ENCODE measurements at regions of chr10 and their contacts with region 1.

Region 1: GRCh38 chr10:43574001-43574892 is at the start of gene ZNF239:
- DNase-seq: peak; percentile 82 to 91
- ATAC-seq: peak; percentile 89 to 92 (median 92)
- H3K4me3 ChIP-seq: peak within 1 kb of the TSS; percentile 35
- H3K4me3 Mint-ChIP-seq: peak within 1 kb of the TSS; percentile 95
- H3K27ac ChIP-seq: peak within 1 kb of the TSS; percentile 62
- H3K27ac Mint-ChIP-seq: peak within 1 kb of the TSS; percentile 93
- H3K4me1 ChIP-seq: peaks cover 27% of the 10 kb centered on the region
- H3K4me1 Mint-ChIP-seq: peaks cover 49 to 55% of the 10 kb centered on the region in 2 donors
- H3K27me3 ChIP-seq: no peaks in the 10 kb centered on the region
- H3K27me3 Mint-ChIP-seq: no peaks in the 10 kb centered on the region
- CTCF ChIP-seq: no peak
- total RNA-seq, gene ZNF239: 0.85 to 1.4 (median 0.94) TPM

Region 2: GRCh38 chr10:42552493-42553407 is 1021.5 kb before region 1 on chr10:
- intact Hi-C with region 1: loop called (anchors 10 kb)
- DNase-seq: peak; percentile 82 to 97
- ATAC-seq: peak; percentile 91 to 98 (median 95)
- H3K4me3 ChIP-seq: peak overlapping the region; percentile 59
- H3K4me3 Mint-ChIP-seq: peak overlapping the region; percentile 95
- H3K27ac ChIP-seq: peak overlapping the region; percentile 65
- H3K27ac Mint-ChIP-seq: peak overlapping the region; percentile 91 to 100
- H3K4me1 ChIP-seq: peaks cover 19% of the 10 kb centered on the region
- H3K4me1 Mint-ChIP-seq: peaks cover 36 to 43% of the 10 kb centered on the region in 2 donors
- H3K27me3 ChIP-seq: no peaks in the 10 kb centered on the region
- H3K27me3 Mint-ChIP-seq: peaks cover 0 to 3% of the 10 kb centered on the region in 2 donors
- CTCF ChIP-seq: no peak

Region 3: GRCh38 chr10:43138021-43138756 is 436.1 kb before region 1 on chr10 and contains the start of gene CSGALNACT2:
- intact Hi-C with region 1: loop called (anchors 5 kb)
- DNase-seq: peak; percentile 91 to 94
- ATAC-seq: peak; percentile 74 to 90 (median 83)
- H3K4me3 ChIP-seq: peak within 1 kb of the TSS; percentile 69
- H3K4me3 Mint-ChIP-seq: peak within 1 kb of the TSS; percentile 98
- H3K27ac ChIP-seq: peak within 1 kb of the TSS; percentile 90
- H3K27ac Mint-ChIP-seq: peak within 1 kb of the TSS; percentile 93 to 96
- H3K4me1 ChIP-seq: peaks cover 34% of the 10 kb centered on the region
- H3K4me1 Mint-ChIP-seq: peaks cover 77 to 78% of the 10 kb centered on the region in 2 donors
- H3K27me3 ChIP-seq: no peaks in the 10 kb centered on the region
- H3K27me3 Mint-ChIP-seq: no peaks in the 10 kb centered on the region
- CTCF ChIP-seq: no peak
- total RNA-seq, gene CSGALNACT2: 49.9 to 57.4 (median 52.8) TPM

Region 4: GRCh38 chr10:43407576-43408330 is 166.5 kb before region 1 on chr10:
- intact Hi-C with region 1: loop called (anchors 5 kb)
- DNase-seq: peak; percentile 80 to 95
- ATAC-seq: peak; percentile 32 to 60 (median 39)
- H3K4me3 ChIP-seq: peak overlapping the region; percentile 96
- H3K4me3 Mint-ChIP-seq: peak overlapping the region; percentile 99
- H3K27ac ChIP-seq: peak overlapping the region; percentile 99
- H3K27ac Mint-ChIP-seq: peak overlapping the region; percentile 99
- H3K4me1 ChIP-seq: peaks cover 56% of the 10 kb centered on the region
- H3K4me1 Mint-ChIP-seq: peaks cover 42 to 47% of the 10 kb centered on the region in 2 donors
- H3K27me3 ChIP-seq: no peaks in the 10 kb centered on the region
- H3K27me3 Mint-ChIP-seq: no peaks in the 10 kb centered on the region
- CTCF ChIP-seq: no peak

Region 5: GRCh38 chr10:43482319-43483078 is 91.7 kb before region 1 on chr10:
- intact Hi-C with region 1: no loop called
- DNase-seq: no peak
- ATAC-seq: no peak
- H3K4me3 ChIP-seq: no peak overlapping the region
- H3K4me3 Mint-ChIP-seq: no peak overlapping the region
- H3K27ac ChIP-seq: no peak overlapping the region
- H3K27ac Mint-ChIP-seq: no peak overlapping the region
- H3K4me1 ChIP-seq: no peaks in the 10 kb centered on the region
- H3K4me1 Mint-ChIP-seq: no peaks in the 10 kb centered on the region
- H3K27me3 ChIP-seq: no peaks in the 10 kb centered on the region
- H3K27me3 Mint-ChIP-seq: no peaks in the 10 kb centered on the region
- CTCF ChIP-seq: no peak

Region 6: DNA sequence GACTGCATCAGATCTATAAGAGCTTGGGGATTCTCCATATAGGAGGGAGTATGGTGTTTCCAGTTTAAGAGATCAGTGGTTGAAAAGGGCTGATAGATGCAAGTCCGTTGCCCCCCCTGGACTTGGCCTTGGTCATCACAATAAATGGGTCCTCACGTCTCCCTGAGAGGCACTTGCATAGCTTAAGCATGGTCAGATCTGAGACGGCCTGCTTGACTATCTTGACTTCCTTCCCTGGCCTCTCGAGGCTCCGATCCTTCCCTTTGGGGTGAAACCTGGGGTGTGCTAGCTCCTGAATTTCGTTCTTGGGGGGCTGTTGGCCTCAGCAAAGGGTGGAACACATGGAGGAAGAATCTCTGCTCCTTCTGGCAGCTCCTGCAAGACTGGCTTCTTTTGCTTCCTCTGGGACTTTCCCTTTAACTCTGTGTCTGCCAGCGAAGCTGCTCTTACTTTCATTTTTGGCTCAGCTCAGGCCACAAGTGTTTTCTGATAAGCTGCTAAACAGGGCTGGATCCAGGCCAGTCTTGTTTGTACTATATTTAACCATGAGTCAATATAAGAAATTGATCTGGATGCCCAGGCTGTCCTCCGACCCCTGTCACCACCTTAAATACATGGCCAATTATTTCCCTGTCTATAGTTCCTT is 20.8 kb after region 1 on chr10:
- intact Hi-C with region 1: loop called (anchors 2 kb)
- DNase-seq: peak in 1 of 2 donors; percentile 72
- ATAC-seq: peak; percentile 83 to 85 (median 84)
- H3K4me3 ChIP-seq: peak overlapping the region; percentile 18
- H3K4me3 Mint-ChIP-seq: peak overlapping the region; percentile 92
- H3K27ac ChIP-seq: peak overlapping the region; percentile 59
- H3K27ac Mint-ChIP-seq: peak overlapping the region; percentile 84 to 90
- H3K4me1 ChIP-seq: peaks cover 48% of the 10 kb centered on the region
- H3K4me1 Mint-ChIP-seq: peaks cover 50% of the 10 kb centered on the region in 2 donors
- H3K27me3 ChIP-seq: no peaks in the 10 kb centered on the region
- H3K27me3 Mint-ChIP-seq: no peaks in the 10 kb centered on the region
- CTCF ChIP-seq: no peak

Region 7: GRCh38 chr10:43606322-43607198 is 32.3 kb after region 1 on chr10 and contains the start of gene ZNF485:
- intact Hi-C with region 1: loop called (anchors 1 kb)
- DNase-seq: peak; percentile 49 to 77
- ATAC-seq: peak; percentile 82 to 96 (median 95)
- H3K4me3 ChIP-seq: peak within 1 kb of the TSS; percentile 83
- H3K4me3 Mint-ChIP-seq: peak within 1 kb of the TSS; percentile 83
- H3K27ac ChIP-seq: peak within 1 kb of the TSS; percentile 52
- H3K27ac Mint-ChIP-seq: peak within 1 kb of the TSS; percentile 70 to 82
- H3K4me1 ChIP-seq: peaks cover 25% of the 10 kb centered on the region
- H3K4me1 Mint-ChIP-seq: peaks cover 22 to 23% of the 10 kb centered on the region in 2 donors
- H3K27me3 ChIP-seq: no peaks in the 10 kb centered on the region
- H3K27me3 Mint-ChIP-seq: no peaks in the 10 kb centered on the region
- CTCF ChIP-seq: no peak
- total RNA-seq, gene ZNF485: 1.1 to 2.8 (median 1.4) TPM

Region 8: DNA sequence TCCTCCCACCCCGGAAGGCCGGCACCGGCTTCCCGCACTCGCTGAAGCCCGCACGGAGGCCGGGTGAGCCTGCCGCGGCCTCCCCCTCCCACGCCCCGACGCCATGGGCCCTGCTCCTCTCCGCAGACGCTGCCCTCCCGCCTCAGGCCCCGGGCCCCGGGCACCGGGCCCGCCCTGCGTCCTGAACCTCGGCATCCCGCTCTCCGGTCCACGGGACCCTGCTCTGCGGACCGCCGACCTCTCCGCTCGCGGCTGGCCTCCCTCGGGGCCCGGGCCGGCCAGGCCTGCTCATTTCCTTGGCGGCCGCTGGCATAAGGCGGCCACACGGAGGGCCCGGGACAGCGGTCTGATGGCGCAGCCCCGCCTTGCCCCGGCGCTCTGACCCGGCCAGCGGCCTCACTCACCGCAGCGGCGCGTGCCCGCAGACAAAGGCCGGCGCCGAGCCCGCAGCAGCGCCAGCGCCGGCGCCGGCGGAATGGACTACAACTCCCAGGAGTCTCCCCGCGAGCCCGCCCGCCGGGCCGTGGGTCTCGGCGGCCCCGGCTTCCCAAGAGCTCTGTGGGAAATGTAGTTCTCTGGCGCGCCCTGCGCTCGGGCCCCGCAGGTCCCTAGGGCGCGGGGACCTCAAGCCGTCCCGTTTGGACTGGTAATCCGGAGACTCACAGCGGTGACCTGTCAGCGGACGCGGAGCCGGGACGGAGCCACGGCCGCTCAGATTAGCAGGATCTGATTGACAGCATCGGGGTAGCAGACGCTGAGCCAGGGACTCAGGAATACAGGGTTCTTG is 74.3 kb after region 1 on chr10 and contains the start of gene ZNF32:
- intact Hi-C with region 1: loop called (anchors 1 kb)
- DNase-seq: peak; percentile 75 to 88
- ATAC-seq: peak; percentile 96 to 98 (median 96)
- H3K4me3 ChIP-seq: peak within 1 kb of the TSS; percentile 68
- H3K4me3 Mint-ChIP-seq: peak within 1 kb of the TSS; percentile 97
- H3K27ac ChIP-seq: peak within 1 kb of the TSS; percentile 68
- H3K27ac Mint-ChIP-seq: peak within 1 kb of the TSS; percentile 86 to 91
- H3K4me1 ChIP-seq: peaks cover 16% of the 10 kb centered on the region
- H3K4me1 Mint-ChIP-seq: peaks cover 28% of the 10 kb centered on the region in 2 donors
- H3K27me3 ChIP-seq: no peaks in the 10 kb centered on the region
- H3K27me3 Mint-ChIP-seq: peaks cover 2 to 4% of the 10 kb centered on the region in 2 donors
- CTCF ChIP-seq: no peak
- total RNA-seq, gene ZNF32: 19.1 to 28.9 (median 26.2) TPM